CD8-positive, alpha-beta T cell (primary cell): ENCODE measurements at regions of chr15 and their contacts with region 1.

Region 1: DNA sequence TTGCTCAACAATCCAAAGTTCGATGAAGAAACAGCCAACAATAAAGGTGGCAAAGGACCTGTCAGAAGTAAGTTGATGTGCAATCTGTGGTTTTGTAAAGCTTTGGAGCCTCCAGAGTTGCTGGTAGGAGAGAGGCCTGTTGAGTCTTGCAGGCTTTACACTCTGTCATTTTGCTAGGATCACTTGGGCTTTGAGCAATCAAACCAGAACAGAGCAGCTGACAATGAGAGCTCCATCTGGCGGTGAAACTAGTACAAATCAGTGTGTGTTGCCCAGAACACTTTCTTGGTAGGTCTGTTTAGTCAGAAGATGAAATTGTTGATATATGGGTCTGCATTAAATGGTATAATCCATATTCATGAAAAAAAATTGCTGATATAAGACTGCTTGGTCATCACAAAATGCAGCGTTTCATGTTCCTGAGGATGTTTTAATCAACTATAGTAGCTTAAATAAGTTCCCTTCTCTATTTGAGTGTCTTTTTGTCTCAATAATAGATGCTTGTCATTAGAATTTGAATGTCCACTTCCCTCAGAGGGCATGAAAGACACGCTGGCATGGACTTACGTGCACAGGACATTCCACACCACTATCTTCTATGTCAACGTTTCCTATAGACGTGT is 25.7 kb downstream of the TMOD2 start:
- DNase-seq: peak; percentile 30 to 81 (median 63)
- ATAC-seq: peak; percentile 71
- H3K4me3 ChIP-seq: no peak overlapping the region
- H3K4me3 Mint-ChIP-seq: no peak overlapping the region
- H3K27ac ChIP-seq: no peak overlapping the region
- H3K27ac Mint-ChIP-seq: no peak overlapping the region
- H3K4me1 ChIP-seq: no peaks in the 10 kb centered on the region
- H3K4me1 Mint-ChIP-seq: peaks cover 6% of the 10 kb centered on the region
- H3K27me3 ChIP-seq: no peaks in the 10 kb centered on the region
- H3K27me3 Mint-ChIP-seq: no peaks in the 10 kb centered on the region
- CTCF ChIP-seq: peak; percentile 67

Region 2: DNA sequence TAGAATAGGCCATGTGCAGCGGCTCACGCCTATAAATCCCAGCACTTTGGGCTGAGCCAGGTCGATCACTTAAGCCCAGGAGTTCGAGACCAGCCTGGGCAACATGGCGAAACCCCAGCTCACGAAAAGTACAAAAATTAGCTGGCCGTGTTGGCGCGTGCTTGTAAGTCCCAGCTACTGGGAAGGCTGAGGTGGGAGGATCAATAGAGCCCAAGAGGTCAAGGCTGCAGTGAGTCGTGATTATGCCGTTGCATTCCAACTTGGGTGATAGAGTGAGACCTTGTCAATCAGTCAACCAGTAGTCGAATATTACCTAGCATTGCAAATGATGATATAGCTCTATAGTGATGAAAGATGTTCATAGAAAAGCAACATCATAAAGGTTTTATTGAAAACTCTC is 1300.9 kb before region 1 on chr15:
- CTCF ChIA-PET with region 1: no interaction called
- POLR2A ChIA-PET with region 1: no interaction called
- intact Hi-C with region 1: no loop called
- DNase-seq: no peak
- ATAC-seq: no peak
- H3K4me3 ChIP-seq: no peak overlapping the region
- H3K4me3 Mint-ChIP-seq: no peak overlapping the region
- H3K27ac ChIP-seq: no peak overlapping the region
- H3K27ac Mint-ChIP-seq: no peak overlapping the region
- H3K4me1 ChIP-seq: no peaks in the 10 kb centered on the region
- H3K4me1 Mint-ChIP-seq: peaks cover 2% of the 10 kb centered on the region
- H3K27me3 ChIP-seq: no peaks in the 10 kb centered on the region
- H3K27me3 Mint-ChIP-seq: no peaks in the 10 kb centered on the region
- CTCF ChIP-seq: no peak

Region 3: DNA sequence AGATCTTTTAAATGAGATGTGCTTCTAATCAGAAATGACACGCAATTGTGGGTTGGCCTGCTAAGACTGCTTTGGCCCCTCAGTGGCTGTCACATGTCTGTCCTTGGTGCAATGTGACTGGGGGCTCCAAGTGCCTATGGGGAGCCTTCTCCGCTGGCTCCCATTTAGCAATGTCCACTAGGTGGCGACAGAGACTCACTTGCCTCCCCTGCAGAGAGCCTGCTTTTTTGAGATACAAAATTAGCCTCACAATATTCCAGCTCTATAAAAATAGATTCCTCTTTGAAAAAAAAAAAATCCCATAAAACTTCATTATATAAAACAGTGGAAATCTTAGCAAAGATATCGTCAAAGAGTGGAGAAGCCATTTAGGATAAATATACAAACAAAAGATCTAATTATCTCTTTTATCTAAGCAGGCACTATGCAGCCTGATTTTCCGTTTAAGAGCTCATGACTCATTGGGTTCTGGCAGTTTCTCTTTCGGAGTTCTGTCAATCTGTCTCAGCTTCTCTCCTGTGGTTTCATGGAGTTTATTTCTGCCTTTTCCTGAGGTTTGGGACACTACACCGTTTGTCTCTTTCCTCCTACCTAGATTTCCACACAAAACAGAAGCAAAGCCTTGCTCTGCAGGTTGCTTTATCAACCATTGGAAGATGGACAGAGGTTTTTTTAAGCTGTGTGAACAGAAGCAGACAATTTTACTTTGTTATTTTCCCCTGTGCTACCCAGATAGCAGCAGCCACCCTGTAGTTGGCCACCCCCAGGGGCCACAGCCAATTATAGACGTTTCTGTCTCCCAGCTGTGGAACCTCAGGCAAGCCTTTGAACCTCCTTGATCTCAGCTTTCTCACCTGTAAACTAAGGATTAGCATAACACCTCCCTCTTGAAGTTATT is 613.9 kb before region 1 on chr15:
- CTCF ChIA-PET with region 1: no interaction called
- POLR2A ChIA-PET with region 1: no interaction called
- intact Hi-C with region 1: loop called in 1 of 2 experiments (anchors 5 kb)
- DNase-seq: peak in 8 of 9 experiments; percentile 20 to 63 (median 52)
- ATAC-seq: no peak
- H3K4me3 ChIP-seq: no peak overlapping the region
- H3K4me3 Mint-ChIP-seq: no peak overlapping the region
- H3K27ac ChIP-seq: no peak overlapping the region
- H3K27ac Mint-ChIP-seq: no peak overlapping the region
- H3K4me1 ChIP-seq: no peaks in the 10 kb centered on the region
- H3K4me1 Mint-ChIP-seq: peaks cover 2% of the 10 kb centered on the region
- H3K27me3 ChIP-seq: no peaks in the 10 kb centered on the region
- H3K27me3 Mint-ChIP-seq: peaks cover 12% of the 10 kb centered on the region
- CTCF ChIP-seq: peak; percentile 86

Region 4: GRCh38 chr15:51658670-51659069 is 118.4 kb before region 1 on chr15:
- CTCF ChIA-PET with region 1: interaction called, 33 read pairs
- POLR2A ChIA-PET with region 1: no interaction called
- intact Hi-C with region 1: no loop called
- DNase-seq: no peak
- ATAC-seq: no peak
- H3K4me3 ChIP-seq: no peak overlapping the region
- H3K4me3 Mint-ChIP-seq: no peak overlapping the region
- H3K27ac ChIP-seq: no peak overlapping the region
- H3K27ac Mint-ChIP-seq: no peak overlapping the region
- H3K4me1 ChIP-seq: no peaks in the 10 kb centered on the region
- H3K4me1 Mint-ChIP-seq: no peaks in the 10 kb centered on the region
- H3K27me3 ChIP-seq: no peaks in the 10 kb centered on the region
- H3K27me3 Mint-ChIP-seq: no peaks in the 10 kb centered on the region
- CTCF ChIP-seq: no peak

Region 5: GRCh38 chr15:51681303-51681963 is 95.6 kb before region 1 on chr15 and contains the start of gene SCG3:
- CTCF ChIA-PET with region 1: interaction called, 10 read pairs
- POLR2A ChIA-PET with region 1: no interaction called
- intact Hi-C with region 1: no loop called
- DNase-seq: peak; percentile 11 to 66 (median 56)
- ATAC-seq: peak; percentile 87
- H3K4me3 ChIP-seq: no peak within 1 kb of the TSS
- H3K4me3 Mint-ChIP-seq: no peak within 1 kb of the TSS
- H3K27ac ChIP-seq: no peak within 1 kb of the TSS
- H3K27ac Mint-ChIP-seq: no peak within 1 kb of the TSS
- H3K4me1 ChIP-seq: no peaks in the 10 kb centered on the region
- H3K4me1 Mint-ChIP-seq: no peaks in the 10 kb centered on the region
- H3K27me3 ChIP-seq: peaks cover 7 to 9% of the 10 kb centered on the region in 2 experiments
- H3K27me3 Mint-ChIP-seq: peaks cover 42% of the 10 kb centered on the region
- CTCF ChIP-seq: no peak
- total RNA-seq, gene SCG3: not detected

Region 6: DNA sequence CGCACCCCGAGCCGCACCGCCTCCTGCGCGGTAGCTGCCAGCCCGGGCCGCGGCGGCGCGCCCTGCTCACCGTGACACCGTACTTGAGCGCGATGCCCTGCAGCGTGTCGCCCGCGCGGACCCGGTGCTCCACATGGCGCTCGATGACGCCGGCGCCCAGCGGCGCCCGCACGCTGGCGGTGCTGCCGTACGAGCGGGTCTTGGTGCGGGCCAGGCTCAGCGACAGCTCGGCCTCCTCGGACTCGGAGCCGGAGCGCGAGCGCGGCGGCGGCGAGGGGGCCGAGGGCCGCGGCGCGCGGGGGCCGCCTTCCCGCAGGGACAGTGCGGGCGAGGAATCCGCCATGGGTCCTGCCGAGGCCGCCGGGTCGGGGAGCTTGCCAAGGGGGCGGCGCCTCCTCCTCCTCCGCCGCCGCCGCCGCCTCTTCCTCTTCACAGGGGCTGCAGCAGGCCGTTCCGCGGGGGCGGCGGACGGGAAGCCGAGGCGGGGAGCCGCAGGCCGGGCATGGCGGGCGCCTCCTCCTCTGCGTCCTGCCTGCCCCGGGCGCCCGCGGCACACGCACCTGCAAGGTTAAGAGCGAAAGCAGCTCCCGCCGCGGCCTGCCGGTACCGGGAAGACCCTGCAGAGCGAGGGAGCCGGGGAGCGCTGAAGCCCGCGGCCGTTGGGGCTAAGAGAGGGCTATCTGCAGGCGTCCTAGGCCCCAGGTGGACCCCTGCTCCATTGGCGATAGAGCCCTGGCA is 39.6 kb before region 1 on chr15 and contains the start of gene LYSMD2:
- CTCF ChIA-PET with region 1: interaction called, 97 read pairs
- POLR2A ChIA-PET with region 1: interaction called, 7 read pairs
- intact Hi-C with region 1: loop called (anchors 1 kb)
- DNase-seq: peak; percentile 30 to 85 (median 71)
- ATAC-seq: peak; percentile 51
- H3K4me3 ChIP-seq: peak within 1 kb of the TSS; percentile 62 to 70
- H3K4me3 Mint-ChIP-seq: peak within 1 kb of the TSS; percentile 91
- H3K27ac ChIP-seq: peak within 1 kb of the TSS; percentile 66 to 92
- H3K27ac Mint-ChIP-seq: peak within 1 kb of the TSS; percentile 99
- H3K4me1 ChIP-seq: peaks cover 43% of the 10 kb centered on the region
- H3K4me1 Mint-ChIP-seq: peaks cover 55% of the 10 kb centered on the region
- H3K27me3 ChIP-seq: no peaks in the 10 kb centered on the region
- H3K27me3 Mint-ChIP-seq: no peaks in the 10 kb centered on the region
- CTCF ChIP-seq: no peak
- total RNA-seq, gene LYSMD2: 18.9 to 20.0 TPM

Region 7: GRCh38 chr15:51759557-51760070 is 17.4 kb before region 1 on chr15:
- CTCF ChIA-PET with region 1: interaction called, 41 read pairs
- POLR2A ChIA-PET with region 1: interaction called, 3 read pairs
- intact Hi-C with region 1: no loop called
- DNase-seq: peak in 1 of 9 experiments; percentile 36
- ATAC-seq: no peak
- H3K4me3 ChIP-seq: no peak overlapping the region
- H3K4me3 Mint-ChIP-seq: no peak overlapping the region
- H3K27ac ChIP-seq: no peak overlapping the region
- H3K27ac Mint-ChIP-seq: no peak overlapping the region
- H3K4me1 ChIP-seq: no peaks in the 10 kb centered on the region
- H3K4me1 Mint-ChIP-seq: peaks cover 12% of the 10 kb centered on the region
- H3K27me3 ChIP-seq: no peaks in the 10 kb centered on the region
- H3K27me3 Mint-ChIP-seq: no peaks in the 10 kb centered on the region
- CTCF ChIP-seq: no peak